Tibial artery (tissue), 4 donors: ENCODE measurements at regions of chr1 and their contacts with region 1.

Region 1: GRCh38 chr1:89762779-89763648 is 57.8 kb upstream of the LRRC8D start:
- DNase-seq: peak; percentile 85 to 89
- H3K4me3 ChIP-seq: peak overlapping the region; percentile 40 to 52
- H3K27ac ChIP-seq: no peak overlapping the region
- H3K4me1 ChIP-seq: peaks cover 0 to 12% (median 7%) of the 10 kb centered on the region in 4 donors
- H3K27me3 ChIP-seq: no peaks in the 10 kb centered on the region
- CTCF ChIP-seq: peak; percentile 95 to 96

Region 2: GRCh38 chr1:89483010-89483756 is 279.8 kb before region 1 on chr1:
- intact Hi-C with region 1: loop called (anchors 2 kb)
- DNase-seq: peak in 1 of 2 donors; percentile 75
- H3K4me3 ChIP-seq: no peak overlapping the region
- H3K27ac ChIP-seq: no peak overlapping the region
- H3K4me1 ChIP-seq: no peaks in the 10 kb centered on the region
- H3K27me3 ChIP-seq: no peaks in the 10 kb centered on the region
- CTCF ChIP-seq: peak; percentile 68 to 71

Region 3: DNA sequence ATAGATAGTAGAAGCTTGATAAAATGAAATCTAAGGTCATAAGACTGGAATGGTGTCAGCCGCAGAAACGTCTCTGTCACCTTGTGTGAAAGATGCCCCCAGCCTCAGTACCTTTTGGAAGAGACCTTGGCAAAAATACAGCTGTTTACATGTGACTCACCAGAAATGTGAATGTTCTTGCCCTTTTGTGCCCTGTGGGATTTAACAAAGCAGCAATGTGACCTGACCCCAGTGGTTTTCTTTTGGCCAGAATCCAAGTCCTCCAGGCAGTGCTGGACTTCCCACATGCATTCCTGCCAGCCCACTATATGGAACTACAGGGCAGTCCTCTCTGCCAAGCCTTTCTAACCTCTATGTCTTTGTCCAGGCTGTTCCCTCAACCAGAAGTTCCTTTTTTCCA is 157.3 kb before region 1 on chr1:
- intact Hi-C with region 1: loop called (anchors 10 kb)
- DNase-seq: no peak
- H3K4me3 ChIP-seq: no peak overlapping the region
- H3K27ac ChIP-seq: no peak overlapping the region
- H3K4me1 ChIP-seq: peaks cover 0 to 8% (median 3%) of the 10 kb centered on the region in 4 donors
- H3K27me3 ChIP-seq: no peaks in the 10 kb centered on the region
- CTCF ChIP-seq: no peak

Region 4: GRCh38 chr1:89632657-89633247 is 130.3 kb before region 1 on chr1 and contains the start of gene LRRC8C:
- intact Hi-C with region 1: loop called (anchors 2 kb)
- DNase-seq: peak; percentile 66 to 90
- H3K4me3 ChIP-seq: peak within 1 kb of the TSS; percentile 80 to 88
- H3K27ac ChIP-seq: peak within 1 kb of the TSS; percentile 79 to 83
- H3K4me1 ChIP-seq: peaks cover 0 to 20% (median 6%) of the 10 kb centered on the region in 4 donors
- H3K27me3 ChIP-seq: no peaks in the 10 kb centered on the region
- CTCF ChIP-seq: peak; percentile 26 to 59

Region 5: GRCh38 chr1:89908672-89909436 is 145.8 kb after region 1 on chr1:
- intact Hi-C with region 1: no loop called
- DNase-seq: no peak
- H3K4me3 ChIP-seq: no peak overlapping the region
- H3K27ac ChIP-seq: no peak overlapping the region
- H3K4me1 ChIP-seq: peaks cover 0 to 10% (median 5%) of the 10 kb centered on the region in 4 donors
- H3K27me3 ChIP-seq: no peaks in the 10 kb centered on the region
- CTCF ChIP-seq: no peak

Region 6: GRCh38 chr1:90809996-90810395 is 1047.0 kb after region 1 on chr1:
- intact Hi-C with region 1: no loop called
- DNase-seq: no peak
- H3K4me3 ChIP-seq: no peak overlapping the region
- H3K27ac ChIP-seq: no peak overlapping the region
- H3K4me1 ChIP-seq: no peaks in the 10 kb centered on the region
- H3K27me3 ChIP-seq: no peaks in the 10 kb centered on the region
- CTCF ChIP-seq: no peak